ENCODE measurements at regions of chr4 and their contacts with region 1.

Region 1: GRCh38 chr4:95267081-95267480 is 281.7 kb downstream of the UNC5C start:
- DNase-seq: no peak
- ATAC-seq: no peak
- H3K4me3 ChIP-seq: no peak overlapping the region
- H3K27ac ChIP-seq: no peak overlapping the region
- H3K4me1 ChIP-seq: no peaks in the 10 kb centered on the region; a peak in 3 of 5 replicates
- H3K27me3 ChIP-seq: no peaks in the 10 kb centered on the region
- CTCF ChIP-seq: no peak
- EP300 ChIP-seq: no peak
- POLR2A ChIP-seq: no peak
- RAD21 ChIP-seq: no peak

Region 2: DNA sequence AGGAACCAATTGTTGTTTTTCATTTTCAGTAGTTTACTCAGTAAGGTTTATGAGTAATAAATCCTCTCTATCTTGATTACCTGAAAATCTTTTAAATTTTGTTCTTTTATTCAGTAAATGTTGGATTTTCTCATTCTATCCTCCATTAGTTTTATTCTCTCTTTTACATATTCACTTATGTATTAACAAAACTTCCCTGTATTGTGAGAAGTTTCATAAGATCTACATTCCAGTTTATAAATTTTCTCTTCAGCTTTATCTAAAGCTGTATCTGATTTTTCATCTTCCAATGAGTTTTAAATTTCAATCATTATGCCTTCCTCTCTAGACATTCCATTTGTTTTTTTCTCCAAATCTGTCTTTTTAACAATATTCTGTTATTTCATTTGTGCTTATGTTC is 28.5 kb before region 1 on chr4:
- CTCF ChIA-PET with region 1: no interaction called
- POLR2A ChIA-PET with region 1: no interaction called
- in situ Hi-C with region 1: no loop called
- intact Hi-C with region 1: loop called (anchors 1 kb)
- DNase-seq: no peak
- ATAC-seq: no peak
- H3K4me3 ChIP-seq: no peak overlapping the region
- H3K27ac ChIP-seq: no peak overlapping the region
- H3K4me1 ChIP-seq: peaks cover 0 to 2% of the 10 kb centered on the region in 2 experiments; a peak in 3 of 5 replicates
- H3K27me3 ChIP-seq: no peaks in the 10 kb centered on the region
- CTCF ChIP-seq: no peak
- EP300 ChIP-seq: no peak
- POLR2A ChIP-seq: no peak
- RAD21 ChIP-seq: no peak

Region 3: DNA sequence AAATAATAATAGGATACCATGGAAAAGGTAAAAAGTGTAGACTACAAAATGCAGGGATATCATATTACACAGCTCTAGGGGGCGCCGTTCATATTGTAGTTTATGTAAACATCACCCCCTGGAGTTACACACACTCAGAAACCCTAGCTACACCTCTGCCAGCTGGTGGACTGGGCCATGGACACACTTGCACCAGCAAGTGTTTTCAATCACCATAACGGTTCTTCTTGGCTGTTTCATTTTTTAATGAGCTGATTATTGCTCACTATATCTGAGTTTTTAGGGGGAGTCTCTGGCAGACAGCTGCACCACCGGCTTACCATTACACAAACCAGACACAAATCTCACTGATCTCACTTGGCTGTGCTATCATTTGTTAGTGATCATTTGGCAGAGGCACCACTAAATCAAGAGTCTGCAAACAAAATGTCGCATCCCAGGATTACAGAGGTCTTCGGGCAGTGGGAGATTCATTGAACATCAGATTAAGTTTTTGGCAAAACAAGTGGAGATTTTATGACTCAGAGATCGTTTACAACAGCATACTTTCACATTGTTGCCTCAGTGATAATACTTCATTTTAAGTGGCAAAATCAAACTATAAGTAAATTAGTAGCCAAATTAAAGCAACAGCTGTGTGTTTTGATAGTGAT is 96.0 kb after region 1 on chr4:
- CTCF ChIA-PET with region 1: no interaction called
- POLR2A ChIA-PET with region 1: no interaction called
- in situ Hi-C with region 1: no loop called
- intact Hi-C with region 1: no loop called
- DNase-seq: peak; percentile 9 to 69 (median 27)
- ATAC-seq: peak; percentile 96
- H3K4me3 ChIP-seq: no peak overlapping the region
- H3K27ac ChIP-seq: no peak overlapping the region
- H3K4me1 ChIP-seq: no peaks in the 10 kb centered on the region; a peak in 1 of 5 replicates
- H3K27me3 ChIP-seq: no peaks in the 10 kb centered on the region
- CTCF ChIP-seq: peak; percentile 65 to 94 (median 85)
- EP300 ChIP-seq: no peak
- POLR2A ChIP-seq: no peak
- RAD21 ChIP-seq: peak in 1 of 2 experiments; percentile 41; a peak in 1 of 4 replicates

Measured in K562 (cell line).